Activated CD8-positive, alpha-beta memory T cell treated with anti-CD3 and anti-CD28 coated beads, Interleukin-2, amount 10 ng/mL, durations not matched to agents 7 days and 5 days (primary cell): ENCODE measurements at regions of chr2 and their contacts with region 1.

Region 1: GRCh38 chr2:191165176-191165643 is 14.4 kb upstream of the STAT4 start:
- DNase-seq: peak; percentile 50
- ATAC-seq: peak; percentile 84
- H3K4me3 Mint-ChIP-seq: no peak overlapping the region
- H3K27ac Mint-ChIP-seq: no peak overlapping the region
- H3K4me1 Mint-ChIP-seq: peaks cover 13% of the 10 kb centered on the region
- H3K27me3 Mint-ChIP-seq: peaks cover 4% of the 10 kb centered on the region

Region 2: DNA sequence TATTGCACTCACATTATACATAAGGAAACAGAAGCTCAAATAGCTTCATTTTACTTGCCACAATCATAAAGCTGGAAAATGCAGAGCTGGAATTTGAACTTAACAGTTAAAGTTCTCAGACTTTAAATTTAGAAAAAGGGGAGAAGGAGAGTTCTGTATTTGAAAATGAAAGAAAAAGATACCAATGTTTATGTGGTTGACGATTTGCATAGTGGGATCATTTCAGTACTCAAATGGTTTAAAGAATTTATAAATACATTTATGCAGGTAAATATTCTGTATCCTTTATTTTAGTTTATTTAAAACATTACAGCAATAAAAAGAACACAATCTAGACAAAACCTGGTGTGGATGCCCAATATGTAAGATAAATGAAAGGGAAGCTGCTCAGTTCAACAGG is 11.1 kb after region 1 on chr2:
- CTCF ChIA-PET with region 1: interaction called, 10 read pairs
- DNase-seq: no peak
- ATAC-seq: no peak
- H3K4me3 Mint-ChIP-seq: peak overlapping the region; percentile 35
- H3K27ac Mint-ChIP-seq: peak overlapping the region; percentile 70
- H3K4me1 Mint-ChIP-seq: peaks cover 37% of the 10 kb centered on the region
- H3K27me3 Mint-ChIP-seq: no peaks in the 10 kb centered on the region

Region 3: GRCh38 chr2:191218292-191218898 is 53.2 kb after region 1 on chr2:
- CTCF ChIA-PET with region 1: interaction called, 11 read pairs
- DNase-seq: peak; percentile 66
- ATAC-seq: peak; percentile 73
- H3K4me3 Mint-ChIP-seq: no peak overlapping the region
- H3K27ac Mint-ChIP-seq: no peak overlapping the region
- H3K4me1 Mint-ChIP-seq: peaks cover 28% of the 10 kb centered on the region
- H3K27me3 Mint-ChIP-seq: no peaks in the 10 kb centered on the region

Region 4: GRCh38 chr2:191521608-191522208 is 356.5 kb after region 1 on chr2:
- CTCF ChIA-PET with region 1: interaction called, 15 read pairs
- DNase-seq: no peak
- ATAC-seq: no peak
- H3K4me3 Mint-ChIP-seq: no peak overlapping the region
- H3K27ac Mint-ChIP-seq: no peak overlapping the region
- H3K4me1 Mint-ChIP-seq: no peaks in the 10 kb centered on the region
- H3K27me3 Mint-ChIP-seq: peaks cover 22% of the 10 kb centered on the region